GM18951 (cell line): ENCODE measurements at regions of chr10 and their contacts with region 1.

Region 1: GRCh38 chr10:29285624-29286051 is 3.2 kb upstream of the LYZL1 start:
- POLR2A ChIP-seq: no peak

Region 2: DNA sequence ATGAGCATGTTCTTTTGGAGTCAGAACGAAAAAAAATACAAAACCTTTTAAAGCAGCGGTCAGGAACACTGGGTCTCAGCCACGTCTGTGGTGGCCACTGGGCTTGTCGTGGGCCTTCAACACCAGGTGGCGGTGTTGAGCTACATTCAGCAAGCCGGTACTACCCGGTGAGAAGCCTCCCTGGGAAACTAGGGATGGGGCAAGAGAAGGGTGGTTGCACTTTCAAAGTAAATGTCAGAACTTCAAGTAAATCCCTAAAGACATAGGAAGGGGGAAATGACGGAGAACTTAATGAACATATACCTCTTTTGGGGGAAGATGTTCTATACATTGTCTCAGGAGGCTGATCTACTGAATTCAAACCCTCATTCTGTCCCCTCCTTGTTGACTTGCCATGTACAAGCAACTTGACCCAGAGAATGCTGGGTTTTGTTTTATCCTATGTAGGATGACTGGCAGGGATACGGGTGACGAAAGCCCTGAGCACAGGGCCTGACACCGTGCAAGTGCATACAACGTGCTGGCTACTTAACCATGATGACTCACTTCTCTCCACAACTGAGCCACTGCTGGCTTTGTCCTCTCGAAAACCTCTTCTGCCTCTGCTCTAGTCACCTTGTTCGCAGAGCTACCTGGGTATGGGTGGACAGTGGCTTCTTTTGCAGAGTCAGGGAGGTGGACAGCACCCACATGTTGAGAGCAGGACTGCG is 657.3 kb before region 1 on chr10:
- in situ Hi-C with region 1: loop called (anchors 25 kb)
- POLR2A ChIP-seq: no peak

Region 3: GRCh38 chr10:30625080-30625479 is 1339.4 kb after region 1 on chr10:
- in situ Hi-C with region 1: loop called (anchors 5 kb)
- POLR2A ChIP-seq: no peak